GM23248 (cell line): ENCODE measurements at regions of chr10 and their contacts with region 1.

Region 1: DNA sequence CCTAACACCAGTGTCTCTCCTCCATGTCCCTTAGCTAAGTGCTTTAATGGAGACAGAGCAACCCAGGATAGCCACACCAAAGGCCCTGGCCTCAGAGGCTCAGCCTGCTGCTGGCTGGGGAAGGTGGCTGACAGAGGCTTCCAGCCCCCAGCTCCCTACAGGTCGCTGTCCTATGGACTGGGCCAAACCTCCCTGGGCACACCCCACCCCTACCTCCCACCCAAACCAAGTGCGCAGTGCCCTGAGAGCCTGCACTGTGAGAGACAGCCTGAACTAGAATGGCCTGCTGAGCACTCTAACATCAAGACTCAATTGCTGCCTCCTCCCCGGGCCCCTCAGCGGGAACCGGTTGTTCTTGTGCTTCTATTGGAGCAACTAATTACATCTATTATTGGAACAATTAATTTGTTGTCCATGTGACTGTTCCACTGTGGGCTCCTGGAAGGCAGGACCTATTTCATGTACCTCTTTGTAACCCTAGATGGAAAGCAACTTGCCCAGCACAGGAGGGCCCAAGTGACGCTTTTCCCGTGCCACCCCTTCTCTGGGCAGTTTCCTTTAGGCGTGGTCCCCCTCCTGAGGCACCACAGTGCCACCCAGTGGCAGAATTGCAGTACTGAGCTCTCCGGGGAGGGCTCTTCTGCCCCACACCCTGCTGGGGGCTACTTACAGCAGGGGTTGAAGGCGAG is 63.6 kb upstream of the WAPL start:
- DNase-seq: peak; percentile 78
- H3K4me3 ChIP-seq: 0 out of 2 replicates have a peak overlapping the region, but pooled peaks have one; percentile 47
- H3K27ac ChIP-seq: no peak overlapping the region
- H3K4me1 ChIP-seq: no peaks in the 10 kb centered on the region
- H3K27me3 ChIP-seq: no peaks in the 10 kb centered on the region

Region 2: GRCh38 chr10:85961104-85962067 is 623.8 kb before region 1 on chr10:
- in situ Hi-C with region 1: no loop called
- DNase-seq: no peak
- H3K4me3 ChIP-seq: no peak overlapping the region
- H3K27ac ChIP-seq: no peak overlapping the region
- H3K4me1 ChIP-seq: no peaks in the 10 kb centered on the region
- H3K27me3 ChIP-seq: no peaks in the 10 kb centered on the region

Region 3: GRCh38 chr10:86399879-86400704 is 185.1 kb before region 1 on chr10:
- in situ Hi-C with region 1: loop called (anchors 10 kb)
- DNase-seq: peak; percentile 99
- H3K4me3 ChIP-seq: peak overlapping the region; percentile 75
- H3K27ac ChIP-seq: peak overlapping the region; percentile 71
- H3K4me1 ChIP-seq: peaks cover 14% of the 10 kb centered on the region
- H3K27me3 ChIP-seq: 0 out of 2 replicates have a peak, but pooled peaks cover 7% of the 10 kb centered on the region